ENCODE measurements at regions of chr17 and their contacts with region 1.

Region 1: DNA sequence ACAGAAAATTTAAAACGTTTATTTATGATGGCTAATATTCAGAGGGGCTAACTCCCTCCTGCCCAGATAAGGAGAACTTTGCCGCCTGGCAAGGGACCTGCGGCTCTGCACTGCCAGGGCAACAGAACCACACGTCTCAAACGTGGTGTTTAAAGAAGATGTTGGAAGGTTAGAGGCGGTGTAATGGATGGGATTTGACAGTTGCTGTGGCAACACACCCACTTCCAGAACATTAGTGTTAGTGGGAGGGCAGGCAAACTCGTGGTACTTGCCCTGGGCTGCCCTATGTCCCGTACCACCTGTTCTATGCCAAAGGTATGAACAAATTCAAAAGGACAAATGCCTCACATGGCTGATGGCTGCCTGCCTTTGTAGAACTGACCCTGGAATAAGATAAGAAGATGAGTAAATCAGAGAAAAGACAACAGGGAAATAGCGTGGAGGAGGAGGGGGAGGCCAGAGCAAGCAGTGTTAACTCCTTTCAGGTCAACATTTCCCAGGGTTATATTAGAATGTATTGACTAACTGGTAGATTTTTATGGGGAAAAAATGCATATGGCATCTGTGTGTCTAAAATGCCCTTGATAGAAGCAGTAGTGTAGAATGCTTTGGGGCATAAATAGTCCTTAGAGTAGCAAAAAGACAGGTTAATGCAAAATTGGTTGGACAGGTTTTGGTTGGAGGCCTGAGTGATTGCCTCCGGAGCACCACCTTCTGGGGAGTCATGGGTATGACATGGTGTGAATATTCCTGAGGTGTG is 30.8 kb downstream of the HLF start:
- DNase-seq: peak; percentile 74
- H3K4me3 Mint-ChIP-seq: no peak overlapping the region
- H3K27ac Mint-ChIP-seq: no peak overlapping the region
- H3K4me1 Mint-ChIP-seq: no peaks in the 10 kb centered on the region
- H3K27me3 Mint-ChIP-seq: no peaks in the 10 kb centered on the region
- CTCF ChIP-seq: peak; percentile 84

Region 2: DNA sequence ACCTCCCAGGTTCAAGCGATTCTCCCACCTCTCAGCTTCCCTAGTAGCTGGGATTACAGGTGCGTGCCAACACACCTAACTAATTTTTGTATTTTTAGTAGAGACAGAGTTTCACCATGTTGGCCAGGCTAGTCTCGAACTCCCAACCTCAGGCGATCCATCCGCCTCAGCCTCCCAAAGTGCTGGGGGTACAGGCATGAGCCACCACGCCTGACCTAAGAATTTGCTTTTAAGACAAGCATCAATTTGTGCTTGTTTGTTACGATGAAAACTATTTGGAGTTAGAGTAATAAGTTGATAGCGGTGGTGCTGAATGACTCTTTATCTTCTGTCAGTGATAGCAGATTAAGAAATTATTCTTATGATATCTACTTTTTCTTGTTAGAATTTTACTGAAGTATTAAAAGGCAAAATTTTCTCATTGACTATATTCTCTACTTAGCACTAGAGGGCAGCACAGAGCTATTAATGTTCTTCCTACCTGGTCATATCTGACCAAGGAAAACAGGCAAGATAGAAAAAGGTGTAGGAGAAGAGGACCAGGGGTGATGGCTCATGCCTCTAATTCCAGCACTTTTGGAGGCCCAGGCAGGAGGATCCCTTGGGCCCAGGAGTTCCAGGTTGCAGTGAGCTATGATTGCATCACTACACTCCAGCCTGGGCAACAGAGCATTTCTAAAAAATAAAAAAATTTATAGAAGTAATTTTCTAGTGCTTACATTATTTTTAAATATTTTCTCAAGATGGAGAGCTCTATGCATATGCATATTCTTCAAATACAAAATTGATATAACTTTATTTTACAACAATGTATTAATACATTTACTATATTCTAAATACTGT is 302.6 kb before region 1 on chr17:
- CTCF ChIA-PET with region 1: interaction called, 29 read pairs
- POLR2A ChIA-PET with region 1: no interaction called
- intact Hi-C with region 1: loop called (anchors 1 kb)
- DNase-seq: peak; percentile 63
- H3K4me3 Mint-ChIP-seq: no peak overlapping the region
- H3K27ac Mint-ChIP-seq: no peak overlapping the region
- H3K4me1 Mint-ChIP-seq: no peaks in the 10 kb centered on the region
- H3K27me3 Mint-ChIP-seq: no peaks in the 10 kb centered on the region
- CTCF ChIP-seq: peak; percentile 61

Region 3: DNA sequence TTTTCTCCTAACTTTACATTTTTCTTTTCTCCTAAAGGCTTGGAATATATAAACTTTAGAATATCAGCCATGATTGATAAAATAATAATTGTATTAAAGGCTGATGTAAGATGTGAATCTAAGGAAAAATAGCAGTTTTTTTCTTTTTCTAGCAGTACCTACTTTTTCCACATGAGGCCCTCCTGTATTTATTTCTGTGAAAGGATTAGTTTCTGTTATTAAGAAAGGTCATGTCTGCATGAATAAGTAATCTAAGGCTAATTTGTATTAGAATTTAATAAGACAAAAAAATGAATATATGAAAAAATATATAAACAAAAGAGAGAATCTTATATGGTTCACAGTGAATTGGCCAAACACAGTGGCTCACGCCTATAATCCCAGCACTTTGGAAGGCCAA is 241.7 kb before region 1 on chr17:
- CTCF ChIA-PET with region 1: interaction called, 14 read pairs
- POLR2A ChIA-PET with region 1: no interaction called
- intact Hi-C with region 1: loop called (anchors 1 kb)
- DNase-seq: no peak
- H3K4me3 Mint-ChIP-seq: no peak overlapping the region
- H3K27ac Mint-ChIP-seq: no peak overlapping the region
- H3K4me1 Mint-ChIP-seq: no peaks in the 10 kb centered on the region
- H3K27me3 Mint-ChIP-seq: no peaks in the 10 kb centered on the region
- CTCF ChIP-seq: peak; percentile 43

Region 4: DNA sequence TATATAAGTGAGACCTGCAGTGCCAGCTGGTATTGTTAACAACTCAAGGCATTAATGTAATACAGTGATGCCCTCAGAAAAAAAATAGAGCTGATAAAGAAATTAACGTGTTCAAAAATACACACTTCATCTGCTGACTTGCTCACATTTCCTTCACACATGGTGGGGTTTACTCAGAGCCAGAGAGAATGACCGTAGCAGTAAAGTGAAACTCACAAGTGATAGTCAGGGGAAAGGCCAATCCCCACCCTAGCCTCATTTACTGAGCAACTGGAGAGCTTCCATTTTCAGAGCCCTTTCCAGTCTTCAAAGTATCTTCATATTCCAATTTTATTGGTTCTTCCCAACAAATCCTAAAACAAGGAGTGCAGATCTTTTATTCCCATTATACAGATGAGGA is 104.8 kb before region 1 on chr17:
- CTCF ChIA-PET with region 1: no interaction called
- POLR2A ChIA-PET with region 1: no interaction called
- intact Hi-C with region 1: no loop called
- DNase-seq: no peak
- H3K4me3 Mint-ChIP-seq: no peak overlapping the region
- H3K27ac Mint-ChIP-seq: no peak overlapping the region
- H3K4me1 Mint-ChIP-seq: no peaks in the 10 kb centered on the region
- H3K27me3 Mint-ChIP-seq: no peaks in the 10 kb centered on the region
- CTCF ChIP-seq: no peak

Region 5: DNA sequence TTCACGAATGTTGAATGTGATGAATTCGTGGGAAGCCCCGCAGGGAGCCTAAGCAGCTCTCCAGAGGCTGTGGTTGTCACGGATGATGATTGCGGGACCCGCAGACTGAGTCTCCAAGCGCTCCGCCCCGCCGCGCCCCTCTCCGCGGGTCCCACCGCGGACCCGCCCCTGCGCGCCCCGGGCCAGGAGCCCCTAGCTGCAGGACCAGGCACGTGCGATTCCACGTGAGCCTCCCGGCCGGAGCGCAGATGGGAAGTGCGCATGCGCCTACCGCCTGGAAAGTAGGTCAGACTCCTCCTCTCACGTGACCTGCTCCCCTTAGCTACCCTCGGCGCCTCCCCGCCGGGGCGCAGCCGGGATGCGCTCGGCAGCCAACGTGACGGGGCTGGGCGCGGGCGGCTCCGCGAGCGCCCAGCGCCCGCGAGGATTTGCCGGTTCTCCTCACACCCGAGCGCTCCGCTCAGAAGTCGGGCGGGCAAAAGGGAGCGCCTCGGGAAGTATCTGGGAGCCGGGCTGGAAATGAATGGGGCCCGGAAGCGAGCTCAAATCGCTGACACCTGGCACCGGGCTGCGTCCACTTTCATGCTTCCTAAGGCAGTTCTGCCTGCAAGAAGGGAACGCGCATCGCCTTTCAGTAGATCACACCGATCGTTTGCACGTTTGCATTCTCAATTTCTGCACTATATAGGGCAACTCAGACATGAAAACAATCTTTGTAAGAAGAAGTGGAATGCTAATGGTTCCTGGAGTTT is 57.2 kb before region 1 on chr17:
- CTCF ChIA-PET with region 1: interaction called, 6 read pairs
- POLR2A ChIA-PET with region 1: interaction called, 5 read pairs
- intact Hi-C with region 1: loop called (anchors 2 kb)
- DNase-seq: peak; percentile 93
- H3K4me3 Mint-ChIP-seq: peak overlapping the region; percentile 76
- H3K27ac Mint-ChIP-seq: no peak overlapping the region
- H3K4me1 Mint-ChIP-seq: peaks cover 18% of the 10 kb centered on the region
- H3K27me3 Mint-ChIP-seq: no peaks in the 10 kb centered on the region
- CTCF ChIP-seq: no peak

Region 6: GRCh38 chr17:55273579-55274354 is 21.8 kb before region 1 on chr17:
- CTCF ChIA-PET with region 1: interaction called, 21 read pairs
- POLR2A ChIA-PET with region 1: no interaction called
- intact Hi-C with region 1: loop called (anchors 1 kb)
- DNase-seq: peak; percentile 89
- H3K4me3 Mint-ChIP-seq: peak overlapping the region; percentile 17
- H3K27ac Mint-ChIP-seq: peak overlapping the region; percentile 79
- H3K4me1 Mint-ChIP-seq: peaks cover 34% of the 10 kb centered on the region
- H3K27me3 Mint-ChIP-seq: no peaks in the 10 kb centered on the region
- CTCF ChIP-seq: no peak

Region 7: GRCh38 chr17:55348749-55349354 is 53.3 kb after region 1 on chr17:
- CTCF ChIA-PET with region 1: interaction called, 18 read pairs
- POLR2A ChIA-PET with region 1: no interaction called
- intact Hi-C with region 1: loop called (anchors 5 kb)
- DNase-seq: peak; percentile 60
- H3K4me3 Mint-ChIP-seq: no peak overlapping the region
- H3K27ac Mint-ChIP-seq: no peak overlapping the region
- H3K4me1 Mint-ChIP-seq: peaks cover 5% of the 10 kb centered on the region
- H3K27me3 Mint-ChIP-seq: no peaks in the 10 kb centered on the region
- CTCF ChIP-seq: peak; percentile 75

Region 8: GRCh38 chr17:55513885-55514591 is 218.4 kb after region 1 on chr17:
- CTCF ChIA-PET with region 1: interaction called, 10 read pairs
- POLR2A ChIA-PET with region 1: no interaction called
- intact Hi-C with region 1: loop called (anchors 1 kb)
- DNase-seq: peak; percentile 80
- H3K4me3 Mint-ChIP-seq: no peak overlapping the region
- H3K27ac Mint-ChIP-seq: no peak overlapping the region
- H3K4me1 Mint-ChIP-seq: no peaks in the 10 kb centered on the region
- H3K27me3 Mint-ChIP-seq: peaks cover 10% of the 10 kb centered on the region
- CTCF ChIP-seq: peak; percentile 82